ENCODE measurements at regions of chr19 and their contacts with region 1.

Region 1: DNA sequence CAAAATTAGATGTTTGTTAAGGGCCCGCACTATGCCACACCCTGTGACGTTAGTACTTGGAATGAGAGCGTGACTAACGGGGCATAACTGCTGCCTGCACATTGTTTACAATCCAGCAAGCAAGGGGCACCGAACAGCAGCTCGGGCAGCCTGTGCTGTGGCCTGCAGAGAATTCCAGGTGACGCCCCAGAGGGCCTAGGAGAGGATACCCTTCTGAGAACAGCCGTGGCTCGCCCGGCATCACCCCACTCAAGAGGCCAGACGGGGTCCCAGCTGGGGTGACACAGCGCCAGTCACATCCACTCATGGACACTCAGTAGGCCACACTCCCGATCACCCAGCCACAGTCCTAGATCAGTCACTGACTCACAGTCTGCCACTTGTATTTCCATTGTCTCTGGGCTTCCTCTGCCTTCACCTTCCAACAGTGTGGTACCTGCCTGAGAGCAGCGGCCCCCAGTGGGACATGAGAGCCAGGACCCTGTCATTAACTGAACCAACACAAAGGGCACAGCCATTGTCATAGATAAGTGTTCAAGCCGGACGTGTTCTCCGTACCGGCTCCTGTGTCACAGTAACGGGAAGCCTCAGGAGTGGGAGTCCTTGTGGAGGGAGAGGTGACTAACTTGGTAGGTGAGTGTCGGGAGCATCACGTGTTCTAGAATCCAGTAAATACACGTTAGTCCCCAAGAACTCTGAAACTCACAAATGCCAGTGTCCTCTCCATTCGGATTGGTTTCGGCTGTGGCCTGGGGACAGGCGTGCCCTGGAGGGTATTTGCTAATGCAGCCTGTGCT is 7.5 kb downstream of the ZNF331 start:
- DNase-seq: peak; percentile 82 to 86
- H3K4me3 ChIP-seq: no peak overlapping the region
- H3K27ac ChIP-seq: peak overlapping the region; percentile 33
- H3K4me1 ChIP-seq: peaks cover 31% of the 10 kb centered on the region
- H3K27me3 ChIP-seq: no peaks in the 10 kb centered on the region
- CTCF ChIP-seq: no peak

Region 2: GRCh38 chr19:53520550-53521372 is 24.7 kb before region 1 on chr19:
- CTCF ChIA-PET with region 1: no interaction called
- POLR2A ChIA-PET with region 1: no interaction called
- intact Hi-C with region 1: loop called (anchors 1 kb)
- DNase-seq: peak; percentile 93 to 97
- H3K4me3 ChIP-seq: peak overlapping the region; percentile 62
- H3K27ac ChIP-seq: no peak overlapping the region
- H3K4me1 ChIP-seq: peaks cover 14% of the 10 kb centered on the region
- H3K27me3 ChIP-seq: no peaks in the 10 kb centered on the region
- CTCF ChIP-seq: no peak

Region 3: GRCh38 chr19:53597023-53597422 is 51.6 kb after region 1 on chr19:
- CTCF ChIA-PET with region 1: no interaction called
- POLR2A ChIA-PET with region 1: no interaction called
- intact Hi-C with region 1: no loop called
- DNase-seq: peak; percentile 90 to 91
- H3K4me3 ChIP-seq: no peak overlapping the region
- H3K27ac ChIP-seq: peak overlapping the region; percentile 40
- H3K4me1 ChIP-seq: peaks cover 15% of the 10 kb centered on the region
- H3K27me3 ChIP-seq: no peaks in the 10 kb centered on the region
- CTCF ChIP-seq: no peak

Region 4: DNA sequence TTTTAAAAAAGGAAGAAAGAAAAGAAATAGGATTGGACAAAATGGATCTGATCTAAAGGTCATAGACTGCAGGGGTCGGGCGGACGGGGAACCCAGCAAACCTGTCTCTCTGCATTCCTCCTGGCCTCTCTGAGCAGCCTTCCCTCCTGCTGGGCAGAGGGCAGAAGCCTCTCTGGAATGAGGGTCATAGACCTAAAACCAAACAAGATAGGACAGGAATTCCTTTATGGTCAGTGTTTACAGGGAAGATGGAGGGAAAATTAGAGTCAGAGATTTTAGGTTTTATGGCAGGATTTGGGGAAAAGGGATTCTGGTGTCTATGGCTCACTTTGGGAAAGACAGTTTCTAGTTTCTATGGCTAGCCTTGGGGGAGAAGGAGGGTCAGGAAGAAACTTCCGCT is 67.3 kb after region 1 on chr19:
- CTCF ChIA-PET with region 1: no interaction called
- POLR2A ChIA-PET with region 1: no interaction called
- intact Hi-C with region 1: loop called (anchors 1 kb)
- DNase-seq: peak; percentile 86 to 92
- H3K4me3 ChIP-seq: peak overlapping the region; percentile 6; the same call in 1 of the 2 replicates
- H3K27ac ChIP-seq: peak overlapping the region; percentile 43
- H3K4me1 ChIP-seq: peaks cover 30% of the 10 kb centered on the region
- H3K27me3 ChIP-seq: no peaks in the 10 kb centered on the region
- CTCF ChIP-seq: no peak